ENCODE measurements at regions of chr7 and their contacts with region 1.

Region 1: GRCh38 chr7:71521506-71521905 is 389.6 kb downstream of the GALNT17 start:
- DNase-seq: no peak
- ATAC-seq: no peak
- H3K4me3 ChIP-seq: no peak overlapping the region
- H3K4me3 Mint-ChIP-seq: no peak overlapping the region
- H3K27ac ChIP-seq: no peak overlapping the region
- H3K27ac Mint-ChIP-seq: no peak overlapping the region
- H3K4me1 ChIP-seq: no peaks in the 10 kb centered on the region
- H3K4me1 Mint-ChIP-seq: no peaks in the 10 kb centered on the region
- H3K27me3 ChIP-seq: no peaks in the 10 kb centered on the region
- H3K27me3 Mint-ChIP-seq: no peaks in the 10 kb centered on the region
- CTCF ChIP-seq: no peak

Region 2: DNA sequence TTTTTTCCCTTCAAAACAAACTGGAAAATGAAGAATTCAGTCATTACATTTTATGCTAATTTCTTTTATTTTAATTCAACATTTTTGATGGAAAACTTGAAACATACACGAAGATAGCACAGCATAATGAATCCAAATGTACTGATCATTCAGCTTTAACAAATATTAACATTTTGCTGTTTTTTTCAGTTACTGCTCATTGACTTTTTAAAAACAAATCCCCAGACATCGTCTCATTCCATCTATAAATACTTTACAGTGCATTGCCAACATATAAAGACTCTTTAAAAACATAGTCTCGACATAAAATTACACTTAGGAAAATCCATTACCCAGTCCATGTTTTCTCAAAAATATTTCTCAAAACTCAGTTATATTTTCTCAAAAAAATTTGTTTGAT is 62.8 kb after region 1 on chr7:
- CTCF ChIA-PET with region 1: no interaction called
- POLR2A ChIA-PET with region 1: no interaction called
- intact Hi-C with region 1: loop called in 1 of 2 experiments (anchors 10 kb)
- DNase-seq: no peak
- ATAC-seq: no peak
- H3K4me3 ChIP-seq: no peak overlapping the region
- H3K4me3 Mint-ChIP-seq: no peak overlapping the region
- H3K27ac ChIP-seq: no peak overlapping the region
- H3K27ac Mint-ChIP-seq: no peak overlapping the region
- H3K4me1 ChIP-seq: no peaks in the 10 kb centered on the region
- H3K4me1 Mint-ChIP-seq: no peaks in the 10 kb centered on the region
- H3K27me3 ChIP-seq: no peaks in the 10 kb centered on the region
- H3K27me3 Mint-ChIP-seq: no peaks in the 10 kb centered on the region
- CTCF ChIP-seq: no peak

Measured in CD8-positive, alpha-beta T cell (primary cell).